ENCODE measurements at regions of chr19 and their contacts with region 1.

Region 1: DNA sequence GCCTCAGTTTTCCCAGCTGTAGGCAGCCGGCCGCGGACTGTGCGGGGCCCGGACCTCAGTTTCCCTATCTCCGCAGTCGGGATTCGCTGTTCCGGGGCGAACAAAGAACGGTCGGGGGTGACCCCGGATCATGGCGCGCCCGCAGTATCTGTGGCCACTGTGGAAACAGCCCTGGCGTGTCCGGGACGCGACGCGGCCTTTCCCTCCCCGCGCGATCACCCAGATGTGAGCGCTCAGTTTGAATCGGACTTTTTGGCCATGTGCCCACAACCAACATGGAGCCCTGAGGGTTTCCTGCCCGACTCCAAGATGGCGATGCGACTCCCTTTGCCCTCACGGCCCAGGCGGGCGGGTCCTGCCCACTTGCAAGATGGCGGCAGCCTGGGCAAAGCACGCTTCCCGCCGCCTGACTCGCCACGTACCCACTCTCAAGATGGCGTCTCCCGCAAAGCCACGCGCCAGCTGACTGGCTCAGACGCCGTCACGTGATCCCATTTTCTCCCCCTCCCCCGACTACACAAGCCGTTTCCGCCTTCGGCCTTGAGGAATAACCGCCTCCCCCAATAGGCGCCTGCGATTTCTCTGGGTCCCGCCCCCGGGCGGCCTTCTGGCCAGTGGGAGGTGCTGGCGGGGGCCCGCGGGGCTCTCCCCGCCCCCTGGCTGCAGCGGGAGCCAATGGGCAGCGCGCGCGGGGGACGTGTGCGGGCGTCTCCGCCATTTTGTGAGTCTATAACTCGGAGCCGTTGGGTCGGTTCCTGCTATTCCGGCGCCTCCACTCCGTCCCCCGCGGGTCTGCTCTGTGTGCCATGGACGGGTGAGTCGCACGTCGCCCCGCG is at the start of gene PTBP1:
- DNase-seq: peak; percentile 100
- ATAC-seq: peak; percentile 86
- H3K4me3 Mint-ChIP-seq: peak within 1 kb of the TSS; percentile 93
- H3K27ac Mint-ChIP-seq: peak within 1 kb of the TSS; percentile 95
- H3K4me1 Mint-ChIP-seq: peaks cover 25% of the 10 kb centered on the region
- H3K27me3 Mint-ChIP-seq: no peaks in the 10 kb centered on the region
- total RNA-seq, gene PTBP1: 584 to 738 TPM

Region 2: DNA sequence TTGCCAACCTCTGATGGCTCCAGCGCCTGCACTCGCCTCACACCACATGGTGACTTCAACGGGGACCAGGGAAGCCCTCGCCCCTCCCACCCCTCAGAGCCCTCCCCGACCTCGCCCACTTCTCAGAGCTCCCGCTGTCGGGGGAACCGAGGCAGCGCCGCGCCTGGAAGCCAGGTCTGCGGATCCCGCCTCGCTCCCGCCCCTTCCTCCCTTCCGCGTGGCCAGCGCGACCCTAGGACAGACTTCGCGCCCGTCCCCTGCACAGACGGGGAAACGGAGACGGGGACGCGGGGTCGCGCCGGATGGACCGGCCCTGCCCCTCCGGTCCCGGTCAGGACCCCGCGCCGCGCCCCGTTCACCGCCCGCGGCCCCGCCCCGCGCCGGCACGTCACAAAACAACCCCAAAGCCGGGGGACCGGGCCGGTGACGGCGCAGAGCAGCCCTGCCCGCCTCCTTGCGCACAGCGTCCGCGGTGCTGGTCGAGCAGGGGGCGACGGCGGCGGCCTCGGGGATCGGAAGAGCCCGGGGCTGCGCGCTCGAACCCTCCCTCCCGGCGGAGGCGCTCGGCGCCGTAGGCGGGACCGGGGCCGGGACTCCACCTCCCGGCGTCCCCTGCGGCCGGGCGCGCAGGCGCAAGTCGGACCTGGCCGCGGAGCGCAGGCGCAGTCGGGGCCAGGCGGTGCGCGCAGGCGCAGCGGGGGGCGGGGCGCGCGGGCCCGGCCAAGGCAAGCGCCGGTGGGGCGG is 265.7 kb before region 1 on chr19:
- CTCF ChIA-PET with region 1: no interaction called
- POLR2A ChIA-PET with region 1: no interaction called
- intact Hi-C with region 1: loop called in 1 of 2 experiments (anchors 1 kb)
- DNase-seq: peak; percentile 93
- ATAC-seq: peak; percentile 78
- H3K4me3 Mint-ChIP-seq: peak overlapping the region; percentile 77
- H3K27ac Mint-ChIP-seq: peak overlapping the region; percentile 84
- H3K4me1 Mint-ChIP-seq: peaks cover 24% of the 10 kb centered on the region
- H3K27me3 Mint-ChIP-seq: peaks cover 1% of the 10 kb centered on the region

Region 3: GRCh38 chr19:662962-663681 is 133.8 kb before region 1 on chr19 and contains the start of gene RNF126:
- CTCF ChIA-PET with region 1: no interaction called
- POLR2A ChIA-PET with region 1: interaction called, 5 read pairs
- intact Hi-C with region 1: loop called (anchors 1 to 5 kb)
- DNase-seq: peak; percentile 98
- ATAC-seq: peak; percentile 49
- H3K4me3 Mint-ChIP-seq: peak within 1 kb of the TSS; percentile 96
- H3K27ac Mint-ChIP-seq: peak within 1 kb of the TSS; percentile 95
- H3K4me1 Mint-ChIP-seq: peaks cover 37% of the 10 kb centered on the region
- H3K27me3 Mint-ChIP-seq: no peaks in the 10 kb centered on the region
- total RNA-seq, gene RNF126: 83.0 to 91.3 TPM

Region 4: GRCh38 chr19:752652-753517 is 44.0 kb before region 1 on chr19:
- CTCF ChIA-PET with region 1: no interaction called
- POLR2A ChIA-PET with region 1: no interaction called
- intact Hi-C with region 1: no loop called
- DNase-seq: no peak
- ATAC-seq: no peak
- H3K4me3 Mint-ChIP-seq: no peak overlapping the region
- H3K27ac Mint-ChIP-seq: no peak overlapping the region
- H3K4me1 Mint-ChIP-seq: peaks cover 3% of the 10 kb centered on the region
- H3K27me3 Mint-ChIP-seq: no peaks in the 10 kb centered on the region

Region 5: GRCh38 chr19:892243-893050 is 95.5 kb after region 1 on chr19:
- CTCF ChIA-PET with region 1: no interaction called
- POLR2A ChIA-PET with region 1: no interaction called
- intact Hi-C with region 1: loop called in 1 of 2 experiments (anchors 1 kb)
- DNase-seq: peak; percentile 33
- ATAC-seq: peak; percentile 37
- H3K4me3 Mint-ChIP-seq: peak overlapping the region; percentile 78
- H3K27ac Mint-ChIP-seq: peak overlapping the region; percentile 77
- H3K4me1 Mint-ChIP-seq: peaks cover 13% of the 10 kb centered on the region
- H3K27me3 Mint-ChIP-seq: no peaks in the 10 kb centered on the region

Region 6: DNA sequence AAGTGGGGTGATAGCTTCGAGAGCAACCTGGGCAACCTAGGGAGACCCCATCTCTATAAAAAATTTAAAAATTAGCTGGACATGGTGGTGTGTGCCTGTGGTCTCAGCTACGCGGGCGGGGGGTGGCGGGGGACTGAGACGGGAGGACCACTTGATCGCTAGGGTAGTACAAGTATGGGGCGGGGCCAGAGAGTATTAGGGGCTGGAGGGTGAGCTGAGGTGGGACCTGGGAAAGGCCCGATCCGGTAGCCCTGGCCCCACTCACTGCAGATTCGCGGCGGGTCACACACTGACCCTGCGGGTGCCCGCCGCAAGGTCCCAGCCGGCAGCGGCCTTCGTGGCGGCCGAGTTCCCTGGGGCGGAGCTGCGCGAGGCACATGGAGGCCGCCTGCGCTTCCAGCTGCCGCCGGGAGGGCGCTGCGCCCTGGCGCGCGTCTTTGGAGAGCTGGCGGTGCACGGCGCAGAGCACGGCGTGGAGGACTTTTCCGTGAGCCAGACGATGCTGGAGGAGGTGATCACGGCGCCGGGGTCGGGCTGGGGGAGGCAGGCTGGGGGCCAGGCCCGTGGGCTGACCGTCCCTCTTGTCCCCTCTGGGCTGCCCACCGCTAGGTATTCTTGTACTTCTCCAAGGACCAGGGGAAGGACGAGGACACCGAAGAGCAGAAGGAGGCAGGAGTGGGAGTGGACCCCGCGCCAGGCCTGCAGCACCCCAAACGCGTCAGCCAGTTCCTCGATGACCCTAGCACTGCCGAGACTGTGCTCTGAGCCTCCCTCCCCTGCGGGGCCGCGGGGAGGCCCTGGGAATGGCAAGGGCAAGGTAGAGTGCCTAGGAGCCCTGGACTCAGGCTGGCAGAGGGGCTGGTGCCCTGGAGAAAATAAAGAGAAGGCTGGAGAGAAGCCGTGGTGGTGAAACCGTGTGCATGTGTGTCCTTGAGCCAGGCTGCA is 268.0 kb after region 1 on chr19:
- CTCF ChIA-PET with region 1: no interaction called
- POLR2A ChIA-PET with region 1: no interaction called
- intact Hi-C with region 1: loop called in 1 of 2 experiments (anchors 5 kb)
- DNase-seq: peak; percentile 86
- ATAC-seq: peak; percentile 48
- H3K4me3 Mint-ChIP-seq: no peak overlapping the region
- H3K27ac Mint-ChIP-seq: no peak overlapping the region
- H3K4me1 Mint-ChIP-seq: peaks cover 33% of the 10 kb centered on the region
- H3K27me3 Mint-ChIP-seq: no peaks in the 10 kb centered on the region

Region 7: DNA sequence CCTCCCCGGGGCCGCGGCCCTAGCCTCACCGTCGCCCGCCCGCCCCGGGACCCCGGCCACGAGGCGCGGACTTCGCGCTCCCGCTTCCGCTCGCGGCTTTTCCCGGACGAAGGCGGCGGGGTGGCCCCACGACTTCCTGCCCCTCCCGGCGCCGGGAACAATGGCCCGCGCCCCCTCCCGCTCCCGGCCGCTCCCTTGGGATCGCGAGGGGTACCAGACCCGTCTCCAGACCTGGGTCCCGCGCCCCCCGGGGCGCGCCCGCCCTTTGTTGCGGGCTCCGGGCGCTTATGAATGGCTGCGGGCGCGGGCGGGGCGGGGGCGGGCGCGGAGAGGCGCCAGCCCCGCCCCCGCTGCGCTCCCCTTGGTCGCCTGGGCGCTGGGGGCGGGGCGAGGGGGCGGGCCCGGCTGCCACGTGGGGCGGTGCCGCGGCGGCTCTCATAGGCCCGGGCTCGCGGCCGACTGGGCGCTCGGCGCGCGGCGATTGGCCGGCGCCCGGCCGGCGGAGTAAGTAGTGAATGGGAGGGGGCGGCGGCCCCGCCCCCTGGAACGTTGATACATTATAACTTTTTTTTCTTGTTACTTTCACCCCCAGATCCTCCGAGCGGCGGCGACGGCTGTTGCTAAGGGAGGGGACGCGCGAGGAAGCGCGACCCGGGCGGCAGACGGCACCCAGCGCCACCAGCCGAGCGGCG is 452.5 kb after region 1 on chr19:
- CTCF ChIA-PET with region 1: no interaction called
- POLR2A ChIA-PET with region 1: no interaction called
- intact Hi-C with region 1: loop called in 1 of 2 experiments (anchors 1 kb)
- DNase-seq: peak; percentile 97
- ATAC-seq: peak; percentile 53
- H3K4me3 Mint-ChIP-seq: peak overlapping the region; percentile 73
- H3K27ac Mint-ChIP-seq: no peak overlapping the region
- H3K4me1 Mint-ChIP-seq: peaks cover 9% of the 10 kb centered on the region
- H3K27me3 Mint-ChIP-seq: no peaks in the 10 kb centered on the region

Region 8: DNA sequence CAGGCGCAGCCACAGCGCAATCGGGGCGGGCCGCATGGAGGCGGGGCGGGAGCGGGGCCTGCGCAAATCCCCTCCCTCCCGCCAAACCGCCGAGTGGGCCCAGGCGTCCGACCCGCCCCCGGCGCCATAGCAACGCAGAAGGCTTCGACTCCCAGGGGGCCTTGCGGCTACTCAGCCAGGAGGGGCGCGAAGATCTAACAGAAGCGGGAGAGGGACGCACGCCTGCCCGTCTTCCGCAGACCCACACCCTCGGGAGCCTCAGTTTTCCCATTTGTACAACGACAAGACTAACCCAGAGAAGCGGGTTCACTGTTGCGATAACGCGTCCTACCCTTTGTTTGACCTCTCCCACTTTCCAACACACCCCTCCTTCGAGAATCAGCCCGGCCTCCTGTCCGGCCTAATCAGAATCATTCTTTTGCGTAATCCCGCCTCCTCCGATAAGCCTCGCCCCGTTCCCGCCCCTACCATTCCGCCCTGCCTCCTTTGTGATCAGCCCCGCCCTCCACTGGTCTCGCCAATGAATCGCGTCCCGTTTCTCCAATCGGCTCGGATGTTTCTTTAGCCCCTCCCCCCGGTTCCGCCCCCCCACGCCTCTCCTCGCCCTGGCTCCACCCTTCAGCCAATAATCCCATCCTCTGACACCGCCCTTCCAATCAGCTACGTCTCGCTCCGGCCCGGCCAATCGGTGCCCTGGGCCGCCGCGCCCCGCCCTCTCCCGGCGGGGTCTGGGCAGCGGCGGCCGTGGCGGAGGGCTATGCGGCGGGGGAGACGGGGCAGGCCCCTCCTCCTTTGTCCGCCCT is 693.6 kb after region 1 on chr19 and contains the start of gene PCSK4:
- CTCF ChIA-PET with region 1: no interaction called
- POLR2A ChIA-PET with region 1: no interaction called
- intact Hi-C with region 1: loop called in 1 of 2 experiments (anchors 2 kb)
- DNase-seq: peak; percentile 99
- ATAC-seq: peak; percentile 92
- H3K4me3 Mint-ChIP-seq: peak within 1 kb of the TSS; percentile 72
- H3K27ac Mint-ChIP-seq: peak within 1 kb of the TSS; percentile 66
- H3K4me1 Mint-ChIP-seq: peaks cover 9% of the 10 kb centered on the region
- H3K27me3 Mint-ChIP-seq: peaks cover 3% of the 10 kb centered on the region
- total RNA-seq, gene PCSK4: 1.8 to 3.9 TPM